Natural killer cell (primary cell): ENCODE measurements at regions of chr3 and their contacts with region 1.

Region 1: GRCh38 chr3:101573449-101574387 is at the start of gene PCNP:
- DNase-seq: peak; percentile 98 to 99
- ATAC-seq: peak; percentile 79 to 95 (median 84)
- H3K4me3 ChIP-seq: peak within 1 kb of the TSS; percentile 82
- H3K4me3 Mint-ChIP-seq: peak within 1 kb of the TSS; percentile 91
- H3K27ac ChIP-seq: peak within 1 kb of the TSS; percentile 96
- H3K27ac Mint-ChIP-seq: peak within 1 kb of the TSS; percentile 97 to 98
- H3K4me1 ChIP-seq: peaks cover 14% of the 10 kb centered on the region
- H3K4me1 Mint-ChIP-seq: peaks cover 41 to 42% of the 10 kb centered on the region in 2 donors
- H3K27me3 ChIP-seq: no peaks in the 10 kb centered on the region
- H3K27me3 Mint-ChIP-seq: no peaks in the 10 kb centered on the region
- CTCF ChIP-seq: peak; percentile 89
- total RNA-seq, gene PCNP: 119 to 132 (median 124) TPM

Region 2: GRCh38 chr3:100260685-100261484 is 1312.8 kb before region 1 on chr3 and contains the start of gene TBC1D23:
- intact Hi-C with region 1: loop called (anchors 10 kb)
- DNase-seq: peak; percentile 94 to 99
- ATAC-seq: peak; percentile 98 to 100 (median 99)
- H3K4me3 ChIP-seq: peak within 1 kb of the TSS; percentile 80
- H3K4me3 Mint-ChIP-seq: peak within 1 kb of the TSS; percentile 94
- H3K27ac ChIP-seq: peak within 1 kb of the TSS; percentile 93
- H3K27ac Mint-ChIP-seq: peak within 1 kb of the TSS; percentile 95 to 96
- H3K4me1 ChIP-seq: peaks cover 18% of the 10 kb centered on the region
- H3K4me1 Mint-ChIP-seq: peaks cover 39 to 48% of the 10 kb centered on the region in 2 donors
- H3K27me3 ChIP-seq: no peaks in the 10 kb centered on the region
- H3K27me3 Mint-ChIP-seq: no peaks in the 10 kb centered on the region
- CTCF ChIP-seq: no peak
- total RNA-seq, gene TBC1D23: 38.8 to 50.3 (median 45.4) TPM

Region 3: DNA sequence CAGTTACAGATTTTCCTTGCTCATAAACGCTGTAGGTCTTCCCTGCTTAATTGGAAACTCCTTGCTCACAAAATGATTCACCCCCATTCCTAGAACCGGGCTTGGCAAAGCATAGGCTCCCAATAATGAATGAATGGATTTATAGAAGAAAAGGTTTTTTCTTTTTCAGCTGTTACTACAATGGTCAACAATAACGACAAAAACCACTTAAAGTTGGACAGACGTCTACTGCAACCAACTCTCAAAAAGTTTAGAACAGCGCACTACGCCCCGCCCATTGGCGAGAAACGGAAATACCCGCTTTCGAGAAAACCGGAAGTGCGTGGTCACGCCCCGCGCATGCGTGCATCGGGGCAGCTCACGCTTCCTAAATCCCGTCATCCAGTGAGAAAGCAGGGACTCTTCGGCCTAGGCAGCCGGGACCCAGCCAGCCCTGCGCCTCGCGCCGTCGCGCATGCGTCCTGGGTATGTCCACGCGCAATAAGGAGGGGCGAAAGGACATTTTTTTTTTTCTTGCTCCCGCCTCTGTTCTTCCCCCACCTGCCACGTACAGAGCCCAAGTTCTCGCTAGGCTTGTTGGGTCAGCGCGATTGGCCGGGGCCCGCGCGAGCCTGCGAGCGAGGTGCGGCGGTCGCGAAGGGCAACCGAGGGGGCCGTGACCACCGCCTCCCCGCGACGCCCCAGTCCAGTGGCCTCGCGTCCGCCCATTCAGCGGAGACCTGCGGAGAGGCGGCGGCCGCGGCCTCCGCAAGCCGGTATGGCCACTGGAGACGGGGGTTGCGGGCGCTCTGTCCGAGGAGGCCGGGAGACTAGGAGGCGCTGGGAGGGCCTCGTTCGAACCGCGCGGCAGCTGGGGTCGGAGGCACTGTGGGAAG is 864.5 kb before region 1 on chr3 and contains the start of gene TFG:
- intact Hi-C with region 1: loop called (anchors 10 kb)
- DNase-seq: peak; percentile 96 to 100
- ATAC-seq: peak; percentile 89 to 97 (median 92)
- H3K4me3 ChIP-seq: peak within 1 kb of the TSS; percentile 44
- H3K4me3 Mint-ChIP-seq: peak within 1 kb of the TSS; percentile 92
- H3K27ac ChIP-seq: peak within 1 kb of the TSS; percentile 84
- H3K27ac Mint-ChIP-seq: peak within 1 kb of the TSS; percentile 97 to 98
- H3K4me1 ChIP-seq: peaks cover 19% of the 10 kb centered on the region
- H3K4me1 Mint-ChIP-seq: peaks cover 37 to 46% of the 10 kb centered on the region in 2 donors
- H3K27me3 ChIP-seq: peaks cover 3% of the 10 kb centered on the region
- H3K27me3 Mint-ChIP-seq: peaks cover 17 to 28% of the 10 kb centered on the region in 2 donors
- CTCF ChIP-seq: no peak
- total RNA-seq, gene TFG: 47.6 to 52.8 (median 50.0) TPM

Region 4: DNA sequence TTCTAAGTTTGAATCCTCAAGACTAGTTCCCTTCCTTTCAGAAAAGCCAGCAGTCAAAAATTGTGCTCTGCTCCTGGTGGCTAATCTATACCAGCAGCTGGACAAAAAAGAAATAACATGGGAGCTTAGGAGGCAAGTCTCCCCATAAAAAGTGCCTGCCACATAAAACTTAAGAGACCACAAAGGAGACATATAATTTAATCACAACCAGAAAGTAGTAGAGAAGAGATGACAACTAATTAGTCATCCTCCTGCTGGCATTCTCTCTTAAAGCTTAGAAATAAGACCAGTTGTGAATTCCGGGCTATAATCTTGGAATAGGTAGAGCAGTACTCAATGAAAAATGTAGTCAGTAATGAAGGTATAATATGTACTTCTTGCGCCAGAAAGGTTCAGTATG is 233.1 kb before region 1 on chr3:
- intact Hi-C with region 1: no loop called
- DNase-seq: no peak
- ATAC-seq: no peak
- H3K4me3 ChIP-seq: no peak overlapping the region
- H3K4me3 Mint-ChIP-seq: no peak overlapping the region
- H3K27ac ChIP-seq: no peak overlapping the region
- H3K27ac Mint-ChIP-seq: no peak overlapping the region
- H3K4me1 ChIP-seq: no peaks in the 10 kb centered on the region
- H3K4me1 Mint-ChIP-seq: peaks cover 0 to 4% of the 10 kb centered on the region in 2 donors
- H3K27me3 ChIP-seq: no peaks in the 10 kb centered on the region
- H3K27me3 Mint-ChIP-seq: no peaks in the 10 kb centered on the region
- CTCF ChIP-seq: no peak

Region 5: GRCh38 chr3:101495552-101495951 is 78.2 kb before region 1 on chr3:
- intact Hi-C with region 1: no loop called
- DNase-seq: no peak
- ATAC-seq: no peak
- H3K4me3 ChIP-seq: no peak overlapping the region
- H3K4me3 Mint-ChIP-seq: no peak overlapping the region
- H3K27ac ChIP-seq: no peak overlapping the region
- H3K27ac Mint-ChIP-seq: peak overlapping the region in 1 of 2 donors; percentile 55
- H3K4me1 ChIP-seq: no peaks in the 10 kb centered on the region
- H3K4me1 Mint-ChIP-seq: peaks cover 35 to 40% of the 10 kb centered on the region in 2 donors
- H3K27me3 ChIP-seq: no peaks in the 10 kb centered on the region
- H3K27me3 Mint-ChIP-seq: no peaks in the 10 kb centered on the region
- CTCF ChIP-seq: no peak

Region 6: GRCh38 chr3:101544161-101544850 is 29.4 kb before region 1 on chr3:
- intact Hi-C with region 1: no loop called
- DNase-seq: peak in 1 of 2 donors; percentile 26
- ATAC-seq: no peak
- H3K4me3 ChIP-seq: no peak overlapping the region
- H3K4me3 Mint-ChIP-seq: no peak overlapping the region
- H3K27ac ChIP-seq: no peak overlapping the region
- H3K27ac Mint-ChIP-seq: no peak overlapping the region
- H3K4me1 ChIP-seq: peaks cover 5% of the 10 kb centered on the region
- H3K4me1 Mint-ChIP-seq: no peaks in the 10 kb centered on the region
- H3K27me3 ChIP-seq: no peaks in the 10 kb centered on the region
- H3K27me3 Mint-ChIP-seq: peaks cover 5 to 10% of the 10 kb centered on the region in 2 donors
- CTCF ChIP-seq: no peak

Region 7: DNA sequence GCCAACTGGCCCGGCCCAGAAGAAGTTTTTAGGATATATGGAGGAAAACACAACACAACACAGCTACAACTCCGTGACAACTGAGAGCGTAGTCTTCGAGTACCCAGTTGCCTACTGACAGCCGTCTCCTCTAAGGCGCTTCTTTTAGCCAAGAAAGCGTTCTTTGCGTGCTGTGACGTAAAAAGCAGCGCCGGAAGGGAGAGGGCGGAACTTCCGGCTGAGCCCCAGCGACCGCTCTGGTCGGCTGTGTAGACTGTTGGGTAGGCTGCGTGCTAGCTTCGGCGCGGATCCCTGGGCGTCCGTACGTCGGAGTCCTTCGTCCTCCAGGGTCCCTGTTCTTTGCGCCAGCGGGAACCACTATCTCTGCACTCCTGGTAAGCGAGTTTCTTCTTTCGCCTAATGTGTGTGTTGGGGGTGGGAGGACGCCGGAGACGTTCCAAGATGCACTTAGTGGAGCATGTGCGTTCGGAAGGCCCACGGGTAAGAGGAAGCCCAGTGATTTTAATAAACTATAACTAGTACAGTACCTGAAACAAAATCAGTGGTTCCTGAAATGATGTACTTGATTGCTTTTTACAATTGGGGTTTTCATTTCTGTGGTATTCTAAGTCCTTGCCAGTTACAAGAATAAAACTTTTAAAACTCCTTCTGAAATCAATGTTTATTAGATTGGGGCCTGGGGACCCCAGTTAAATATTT is 11.9 kb before region 1 on chr3 and contains the start of gene TRMT10C:
- intact Hi-C with region 1: loop called (anchors 1 kb)
- DNase-seq: peak; percentile 89 to 97
- ATAC-seq: peak; percentile 96 to 97 (median 96)
- H3K4me3 ChIP-seq: peak within 1 kb of the TSS; percentile 91
- H3K4me3 Mint-ChIP-seq: peak within 1 kb of the TSS; percentile 94
- H3K27ac ChIP-seq: peak within 1 kb of the TSS; percentile 91
- H3K27ac Mint-ChIP-seq: peak within 1 kb of the TSS; percentile 87 to 91
- H3K4me1 ChIP-seq: peaks cover 13% of the 10 kb centered on the region
- H3K4me1 Mint-ChIP-seq: peaks cover 18 to 20% of the 10 kb centered on the region in 2 donors
- H3K27me3 ChIP-seq: peaks cover 9% of the 10 kb centered on the region
- H3K27me3 Mint-ChIP-seq: peaks cover 7 to 12% of the 10 kb centered on the region in 2 donors
- CTCF ChIP-seq: no peak
- total RNA-seq, gene TRMT10C: 18.4 to 19.1 (median 19.0) TPM

Region 8: GRCh38 chr3:101676765-101677435 is 103.2 kb after region 1 on chr3 and contains the start of gene ZBTB11:
- intact Hi-C with region 1: loop called (anchors 1 kb)
- DNase-seq: peak; percentile 100
- ATAC-seq: peak; percentile 67 to 81 (median 71)
- H3K4me3 ChIP-seq: peak within 1 kb of the TSS; percentile 92
- H3K4me3 Mint-ChIP-seq: peak within 1 kb of the TSS; percentile 97
- H3K27ac ChIP-seq: peak within 1 kb of the TSS; percentile 98
- H3K27ac Mint-ChIP-seq: peak within 1 kb of the TSS; percentile 96 to 98
- H3K4me1 ChIP-seq: peaks cover 20% of the 10 kb centered on the region
- H3K4me1 Mint-ChIP-seq: peaks cover 45 to 52% of the 10 kb centered on the region in 2 donors
- H3K27me3 ChIP-seq: no peaks in the 10 kb centered on the region
- H3K27me3 Mint-ChIP-seq: no peaks in the 10 kb centered on the region
- CTCF ChIP-seq: no peak
- total RNA-seq, gene ZBTB11: 72.0 to 90.9 (median 83.5) TPM

Region 9: DNA sequence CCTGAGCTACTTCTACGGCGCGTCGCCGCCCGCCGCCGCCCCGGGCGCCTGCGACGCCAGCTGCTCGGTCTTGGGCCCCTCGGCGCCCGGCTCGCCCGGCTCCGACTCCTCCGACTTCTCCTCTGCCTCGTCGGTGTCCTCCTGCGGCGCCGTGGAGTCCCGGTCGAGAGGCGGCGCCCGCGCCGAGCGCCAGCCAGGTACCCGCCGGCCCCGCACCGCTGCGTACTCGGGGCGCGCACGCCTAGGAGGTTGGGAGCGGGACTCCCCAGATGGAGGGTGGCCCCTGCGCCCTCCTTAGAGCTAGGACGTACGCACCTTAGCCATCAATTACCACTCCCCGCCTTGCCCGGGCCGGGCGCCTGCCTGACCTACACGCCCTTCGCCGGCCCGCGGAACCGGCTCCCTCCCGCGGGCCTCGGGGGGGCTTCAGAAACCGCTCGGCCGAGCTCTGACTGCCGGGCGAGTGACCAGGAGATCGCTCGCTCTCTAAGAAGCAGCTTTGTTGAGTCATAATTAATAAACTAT is 276.1 kb after region 1 on chr3:
- intact Hi-C with region 1: loop called (anchors 5 kb)
- DNase-seq: peak; percentile 49 to 74
- ATAC-seq: peak; percentile 17 to 23 (median 19)
- H3K4me3 ChIP-seq: peak overlapping the region; percentile 82
- H3K4me3 Mint-ChIP-seq: peak overlapping the region; percentile 94
- H3K27ac ChIP-seq: peak overlapping the region; percentile 82
- H3K27ac Mint-ChIP-seq: peak overlapping the region; percentile 98 to 99
- H3K4me1 ChIP-seq: peaks cover 9% of the 10 kb centered on the region
- H3K4me1 Mint-ChIP-seq: peaks cover 38 to 45% of the 10 kb centered on the region in 2 donors
- H3K27me3 ChIP-seq: no peaks in the 10 kb centered on the region
- H3K27me3 Mint-ChIP-seq: no peaks in the 10 kb centered on the region
- CTCF ChIP-seq: no peak